ACHN (cell line): ENCODE measurements at regions of chr10 and their contacts with region 1.

Region 1: DNA sequence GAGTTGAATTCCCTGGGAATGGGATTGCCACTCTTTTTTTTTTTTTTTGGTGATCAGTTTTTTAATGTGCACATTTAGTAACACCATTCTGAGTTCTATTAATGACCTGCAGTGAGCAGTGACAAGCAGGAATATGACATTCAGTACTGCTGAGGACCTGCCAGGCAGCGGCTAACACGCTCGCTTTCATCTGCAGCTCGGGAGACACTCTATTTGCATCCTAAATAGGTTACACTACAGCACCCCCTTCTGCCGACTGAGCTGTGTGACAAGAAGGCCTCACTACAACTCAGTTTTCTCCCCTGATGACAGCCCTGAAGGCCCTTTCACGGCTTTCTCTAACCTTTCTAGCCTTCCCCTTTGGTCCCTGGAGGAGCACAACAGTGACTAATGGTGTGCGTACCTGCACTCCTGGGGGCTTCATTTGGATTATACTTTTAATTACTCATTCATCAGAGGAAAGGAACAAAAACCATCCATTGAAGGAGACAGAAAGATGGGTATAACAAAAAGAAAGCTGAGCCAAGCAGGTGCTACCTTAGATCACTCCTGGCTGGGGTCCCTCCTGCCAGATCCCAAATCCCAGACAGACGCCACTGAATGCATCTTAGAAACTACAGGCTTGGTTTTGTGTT is 872.4 kb downstream of the LRMDA start:
- DNase-seq: peak; percentile 82

Region 2: DNA sequence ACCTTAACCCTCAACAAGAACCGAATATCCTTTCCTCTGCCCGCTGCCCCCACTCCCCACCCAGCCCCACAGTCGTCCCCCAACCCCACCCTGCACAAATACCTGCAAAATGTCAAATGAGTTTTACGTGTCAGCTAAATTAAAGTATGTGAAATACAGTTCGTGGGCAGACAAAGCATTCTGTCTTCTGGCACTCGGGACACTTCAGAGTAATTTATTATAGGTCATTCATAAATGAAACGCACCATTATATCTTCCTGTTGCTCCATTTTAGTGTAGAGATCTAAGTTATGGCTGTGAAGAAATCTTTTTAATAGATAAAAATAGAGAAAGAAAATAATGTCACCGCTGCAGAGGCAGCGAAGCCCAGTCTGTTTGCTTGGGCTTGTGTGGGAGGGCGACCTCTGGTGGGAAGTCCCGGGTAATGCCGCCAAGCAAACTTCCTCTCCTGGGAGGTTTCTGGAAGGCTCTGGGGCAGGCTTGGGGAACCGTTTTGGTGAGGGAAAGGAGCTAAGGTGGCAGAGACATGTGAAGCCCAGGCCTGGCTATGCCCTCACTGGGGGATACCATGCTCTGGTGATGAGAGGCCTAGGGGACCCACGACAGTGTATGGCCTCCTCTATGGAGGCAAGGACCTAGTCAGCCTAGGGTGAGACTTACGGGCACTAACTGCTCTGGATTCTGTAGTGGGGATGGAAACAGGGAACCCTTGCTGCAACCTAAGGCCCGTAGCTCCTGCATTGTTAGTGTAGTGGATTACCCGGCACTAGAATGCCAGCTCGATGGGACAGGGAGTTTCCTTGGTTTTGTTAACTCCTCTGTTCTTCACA is 267.5 kb before region 1 on chr10:
- in situ Hi-C with region 1: loop called (anchors 25 kb)
- DNase-seq: peak; percentile 63